ENCODE measurements at regions of chr11 and their contacts with region 1.

Region 1: GRCh38 chr11:119694334-119694733 is 34.7 kb downstream of the NECTIN1 start:
- DNase-seq: no peak
- H3K4me3 Mint-ChIP-seq: no peak overlapping the region
- H3K27ac Mint-ChIP-seq: no peak overlapping the region
- H3K4me1 Mint-ChIP-seq: peaks cover 13% of the 10 kb centered on the region
- H3K27me3 Mint-ChIP-seq: no peaks in the 10 kb centered on the region
- CTCF ChIP-seq: no peak

Region 2: DNA sequence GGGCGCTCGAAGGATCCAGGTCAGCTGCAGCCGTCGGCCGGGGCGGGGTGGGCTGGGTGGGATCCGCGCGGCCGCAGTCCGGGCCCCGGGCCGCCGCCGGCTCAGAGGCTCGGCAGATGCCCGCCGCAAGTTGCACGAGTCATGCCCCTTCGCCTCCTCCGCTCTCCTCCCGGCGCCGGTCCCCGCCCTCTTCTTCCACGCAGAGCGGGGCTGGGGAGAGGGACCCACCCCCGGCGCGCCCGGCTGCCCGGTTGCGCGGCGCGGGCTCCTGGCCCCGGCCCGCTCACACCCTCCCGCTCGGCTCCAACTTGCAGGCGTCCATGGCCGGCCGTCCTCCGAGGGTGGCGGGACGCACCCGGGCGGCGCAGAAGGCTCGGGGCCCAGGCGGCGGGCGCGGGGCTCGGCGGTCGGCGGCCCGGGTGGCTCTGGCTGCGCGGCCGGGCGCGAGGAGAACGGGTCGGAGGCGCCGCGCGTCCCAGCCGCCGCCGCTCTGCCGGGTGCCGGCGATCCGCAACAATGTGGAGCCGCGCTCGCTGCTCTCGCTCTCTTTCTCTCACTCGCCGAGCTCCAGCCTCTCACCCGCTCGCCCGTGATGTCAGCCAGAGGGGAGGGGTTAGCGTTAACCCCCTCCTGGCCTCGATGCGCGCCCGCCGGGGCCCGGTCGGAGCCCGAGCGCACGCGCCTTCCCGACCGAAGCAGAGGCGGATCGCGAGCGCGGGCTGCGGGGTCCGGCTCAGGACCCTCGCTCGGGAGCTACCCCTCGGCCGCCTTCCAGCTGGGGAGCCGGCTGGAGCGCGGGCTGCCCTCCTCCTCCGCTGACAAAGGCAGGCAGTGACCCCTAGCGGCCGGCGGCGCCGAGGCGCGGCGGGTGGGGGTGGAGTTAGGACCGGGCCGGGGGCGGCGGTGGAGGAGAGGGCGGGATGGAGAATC is 34.6 kb after region 1 on chr11 and contains the start of gene NECTIN1:
- CTCF ChIA-PET with region 1: interaction called, 6 read pairs
- intact Hi-C with region 1: loop called (anchors 5 kb)
- DNase-seq: peak; percentile 84
- H3K4me3 Mint-ChIP-seq: peak within 1 kb of the TSS; percentile 78
- H3K27ac Mint-ChIP-seq: peak within 1 kb of the TSS; percentile 66
- H3K4me1 Mint-ChIP-seq: no peaks in the 10 kb centered on the region
- H3K27me3 Mint-ChIP-seq: peaks cover 10% of the 10 kb centered on the region
- CTCF ChIP-seq: peak; percentile 91
- total RNA-seq, gene NECTIN1: 22.1 and 28.5 TPM in 2 replicates

Region 3: GRCh38 chr11:119844808-119845207 is 150.5 kb after region 1 on chr11:
- CTCF ChIA-PET with region 1: no interaction called
- intact Hi-C with region 1: no loop called
- DNase-seq: no peak
- H3K4me3 Mint-ChIP-seq: no peak overlapping the region
- H3K27ac Mint-ChIP-seq: no peak overlapping the region
- H3K4me1 Mint-ChIP-seq: no peaks in the 10 kb centered on the region
- H3K27me3 Mint-ChIP-seq: peaks cover 29% of the 10 kb centered on the region
- CTCF ChIP-seq: no peak

Measured in Calu3 (cell line).